GM23248 (cell line): ENCODE measurements at regions of chr7 and their contacts with region 1.

Region 1: GRCh38 chr7:90455163-90456030 is 14.0 kb upstream of the PTTG1IP2 start:
- DNase-seq: peak; percentile 70
- H3K4me3 ChIP-seq: peak overlapping the region; percentile 72
- H3K27ac ChIP-seq: no peak overlapping the region
- H3K4me1 ChIP-seq: no peaks in the 10 kb centered on the region
- H3K27me3 ChIP-seq: no peaks in the 10 kb centered on the region

Region 2: DNA sequence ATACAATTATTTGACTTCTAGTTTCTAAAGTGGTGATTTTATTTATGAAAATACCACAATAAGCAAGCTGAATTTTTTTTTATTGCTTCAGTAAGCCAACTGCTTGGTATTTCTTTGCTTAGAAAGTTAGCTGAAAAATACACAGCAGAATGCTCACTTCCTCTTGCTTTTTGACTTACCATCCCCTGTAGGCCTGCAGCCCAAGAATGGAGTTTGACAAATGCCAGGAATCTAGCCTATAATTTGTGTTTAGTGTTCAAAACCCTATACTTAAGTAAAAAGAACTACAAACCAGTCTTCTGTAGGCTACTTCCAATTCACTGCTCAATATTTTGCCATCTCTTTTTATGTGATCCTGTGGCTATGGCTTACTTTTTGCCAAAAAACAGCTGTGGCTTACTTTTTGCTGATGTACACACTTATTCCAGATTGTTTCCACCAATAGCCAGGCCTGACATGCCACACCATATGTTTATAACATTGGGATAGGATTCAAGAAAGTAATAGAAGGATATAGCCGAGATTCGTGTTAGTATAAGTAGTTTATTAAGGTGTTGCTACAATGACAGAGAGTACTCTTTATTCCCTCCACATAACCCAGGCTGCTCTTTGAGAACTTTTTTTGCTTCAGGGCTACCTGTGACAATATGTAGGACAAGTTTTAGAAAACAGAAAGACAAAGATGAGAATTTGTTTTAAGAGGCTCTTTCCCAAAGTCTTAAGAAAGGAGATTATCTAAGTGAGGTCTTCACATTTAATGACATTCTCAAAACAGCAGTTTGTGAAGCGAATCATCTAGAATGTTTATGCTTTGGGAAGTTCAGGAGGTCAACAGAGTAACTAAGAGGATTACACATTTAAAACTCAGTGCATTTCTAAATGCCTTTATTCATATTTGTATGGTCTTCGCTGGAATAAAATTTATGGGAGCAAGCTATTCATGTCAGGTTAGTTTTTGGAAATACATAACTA is 544.9 kb after region 1 on chr7:
- in situ Hi-C with region 1: loop called (anchors 25 kb)
- DNase-seq: peak; percentile 68
- H3K4me3 ChIP-seq: no peak overlapping the region
- H3K27ac ChIP-seq: peak overlapping the region; percentile 30
- H3K4me1 ChIP-seq: peaks cover 18% of the 10 kb centered on the region
- H3K27me3 ChIP-seq: no peaks in the 10 kb centered on the region